Activated CD4-positive, alpha-beta memory T cell treated with anti-CD3 and anti-CD28 coated beads for 36 hours (primary cell): ENCODE measurements at regions of chr12 and their contacts with region 1.

Region 1: DNA sequence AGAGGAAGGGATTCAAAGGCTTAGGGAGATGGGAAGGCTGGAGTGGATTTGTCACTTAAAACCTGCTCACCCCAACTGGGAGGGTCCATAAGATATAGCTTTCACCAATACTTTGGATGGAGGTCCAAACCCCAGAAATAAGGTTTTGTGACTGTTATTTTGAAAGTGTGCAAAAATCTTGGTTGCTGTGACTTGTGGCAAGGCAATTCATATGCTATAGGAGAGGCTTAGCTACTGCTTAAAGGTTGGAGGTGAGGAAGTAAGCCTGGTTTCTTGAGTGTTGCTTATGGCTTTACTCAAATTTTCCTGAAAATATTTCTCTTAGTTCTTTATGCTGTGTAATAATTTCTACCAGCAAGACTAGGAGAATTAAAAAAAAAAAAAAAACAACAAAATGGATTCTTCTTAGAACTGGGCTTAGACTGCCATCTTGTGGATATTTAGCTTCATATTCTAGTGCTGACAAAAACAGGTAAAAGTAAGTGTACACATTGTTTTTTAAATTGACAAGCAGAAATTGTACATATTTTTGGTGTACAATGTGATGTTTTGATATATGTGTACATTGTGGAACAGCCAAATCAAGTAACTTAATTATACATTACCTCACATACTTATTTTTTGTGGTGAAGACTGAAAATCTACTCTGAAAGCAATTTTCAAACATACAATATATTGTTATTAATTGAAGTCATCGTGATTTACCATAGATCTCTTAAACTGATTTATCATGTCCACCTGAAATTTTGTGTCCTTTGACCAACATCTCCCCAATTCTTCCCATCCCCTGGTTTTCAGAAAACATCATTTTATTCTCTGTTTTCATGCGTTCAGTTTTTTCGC is 23.0 kb downstream of the PDE6H start:
- DNase-seq: no peak
- H3K4me3 Mint-ChIP-seq: no peak overlapping the region
- H3K27ac Mint-ChIP-seq: no peak overlapping the region
- H3K4me1 Mint-ChIP-seq: peaks cover 25% of the 10 kb centered on the region
- H3K27me3 Mint-ChIP-seq: no peaks in the 10 kb centered on the region

Region 2: DNA sequence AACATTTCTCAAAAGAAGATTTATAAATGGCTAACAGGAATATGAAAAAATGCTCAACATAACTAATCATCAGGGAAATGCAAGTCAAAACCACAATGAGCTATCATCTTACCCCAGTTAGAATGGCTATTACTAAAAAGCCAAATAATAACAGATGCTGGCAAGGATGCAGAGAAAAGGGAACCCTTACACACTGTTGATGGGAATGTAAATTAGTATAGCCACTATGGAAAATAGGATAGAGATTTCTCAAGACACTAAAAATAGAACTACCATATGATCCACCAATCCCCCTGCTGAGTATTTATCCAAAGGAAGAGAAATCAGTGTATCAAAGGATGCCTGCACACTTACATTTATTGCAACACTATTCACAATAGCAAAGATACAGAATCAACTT is 357.7 kb before region 1 on chr12:
- CTCF ChIA-PET with region 1: no interaction called
- POLR2A ChIA-PET with region 1: no interaction called
- intact Hi-C with region 1: no loop called
- DNase-seq: no peak
- H3K4me3 Mint-ChIP-seq: no peak overlapping the region
- H3K27ac Mint-ChIP-seq: no peak overlapping the region
- H3K4me1 Mint-ChIP-seq: peaks cover 7% of the 10 kb centered on the region
- H3K27me3 Mint-ChIP-seq: no peaks in the 10 kb centered on the region

Region 3: DNA sequence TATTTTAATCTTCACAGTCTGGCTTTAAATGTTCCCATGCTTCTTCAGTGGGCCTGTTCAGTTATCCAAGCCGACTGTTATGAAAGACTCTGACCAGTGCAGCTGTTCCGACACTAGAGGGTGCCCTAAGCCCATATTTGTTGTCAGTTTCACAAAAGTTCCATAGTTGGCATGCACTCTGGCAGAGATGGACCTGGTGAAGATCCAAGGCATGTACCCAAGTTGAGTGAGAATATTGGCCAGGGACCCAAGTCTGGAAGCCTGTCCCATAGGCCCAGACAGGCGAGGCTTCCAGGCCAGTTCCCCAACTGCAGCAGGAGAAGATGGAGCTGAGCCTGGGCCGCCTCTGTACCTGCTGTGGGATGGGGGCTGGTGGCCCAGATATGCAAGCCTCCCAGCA is 272.0 kb before region 1 on chr12:
- CTCF ChIA-PET with region 1: interaction called, 33 read pairs
- POLR2A ChIA-PET with region 1: no interaction called
- intact Hi-C with region 1: loop called (anchors 1 kb)
- DNase-seq: peak; percentile 65
- H3K4me3 Mint-ChIP-seq: no peak overlapping the region
- H3K27ac Mint-ChIP-seq: no peak overlapping the region
- H3K4me1 Mint-ChIP-seq: no peaks in the 10 kb centered on the region
- H3K27me3 Mint-ChIP-seq: peaks cover 2% of the 10 kb centered on the region

Region 4: GRCh38 chr12:14845350-14845750 is 150.5 kb before region 1 on chr12:
- CTCF ChIA-PET with region 1: interaction called, 121 read pairs
- POLR2A ChIA-PET with region 1: no interaction called
- intact Hi-C with region 1: loop called (anchors 1 kb)
- DNase-seq: peak; percentile 43
- H3K4me3 Mint-ChIP-seq: no peak overlapping the region
- H3K27ac Mint-ChIP-seq: no peak overlapping the region
- H3K4me1 Mint-ChIP-seq: no peaks in the 10 kb centered on the region
- H3K27me3 Mint-ChIP-seq: no peaks in the 10 kb centered on the region

Region 5: DNA sequence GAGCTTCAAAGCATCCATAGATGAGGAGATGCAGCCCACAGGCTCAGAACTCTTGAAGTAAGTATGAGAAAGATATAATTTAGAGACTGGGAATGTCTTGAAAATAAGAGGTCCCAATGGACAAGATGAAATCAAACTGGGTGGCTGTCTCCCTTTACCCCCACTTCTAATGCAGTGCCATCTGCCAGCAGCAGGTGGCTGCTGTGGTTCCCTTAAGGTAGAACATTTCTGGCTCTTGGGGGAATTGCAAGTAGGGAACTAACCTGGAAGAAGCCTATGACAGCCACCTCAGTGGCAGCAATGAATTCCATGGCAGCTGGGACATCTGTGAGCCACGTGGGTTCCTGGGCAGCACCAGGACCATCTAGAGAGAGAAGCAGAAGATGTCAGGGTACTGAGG is 58.1 kb before region 1 on chr12:
- CTCF ChIA-PET with region 1: interaction called, 41 read pairs
- POLR2A ChIA-PET with region 1: no interaction called
- intact Hi-C with region 1: loop called (anchors 2 kb)
- DNase-seq: peak; percentile 33
- H3K4me3 Mint-ChIP-seq: no peak overlapping the region
- H3K27ac Mint-ChIP-seq: peak overlapping the region; percentile 50
- H3K4me1 Mint-ChIP-seq: peaks cover 38% of the 10 kb centered on the region
- H3K27me3 Mint-ChIP-seq: no peaks in the 10 kb centered on the region

Region 6: GRCh38 chr12:14960548-14961465 is 35.0 kb before region 1 on chr12:
- CTCF ChIA-PET with region 1: interaction called, 4 read pairs
- POLR2A ChIA-PET with region 1: interaction called, 4 read pairs
- intact Hi-C with region 1: loop called (anchors 2 kb)
- DNase-seq: peak; percentile 49
- H3K4me3 Mint-ChIP-seq: peak overlapping the region; percentile 88
- H3K27ac Mint-ChIP-seq: peak overlapping the region; percentile 96
- H3K4me1 Mint-ChIP-seq: peaks cover 43% of the 10 kb centered on the region
- H3K27me3 Mint-ChIP-seq: no peaks in the 10 kb centered on the region

Region 7: GRCh38 chr12:15074351-15074750 is 78.5 kb after region 1 on chr12:
- CTCF ChIA-PET with region 1: no interaction called
- POLR2A ChIA-PET with region 1: no interaction called
- intact Hi-C with region 1: no loop called
- DNase-seq: no peak
- H3K4me3 Mint-ChIP-seq: no peak overlapping the region
- H3K27ac Mint-ChIP-seq: no peak overlapping the region
- H3K4me1 Mint-ChIP-seq: peaks cover 11% of the 10 kb centered on the region
- H3K27me3 Mint-ChIP-seq: peaks cover 6% of the 10 kb centered on the region

Region 8: DNA sequence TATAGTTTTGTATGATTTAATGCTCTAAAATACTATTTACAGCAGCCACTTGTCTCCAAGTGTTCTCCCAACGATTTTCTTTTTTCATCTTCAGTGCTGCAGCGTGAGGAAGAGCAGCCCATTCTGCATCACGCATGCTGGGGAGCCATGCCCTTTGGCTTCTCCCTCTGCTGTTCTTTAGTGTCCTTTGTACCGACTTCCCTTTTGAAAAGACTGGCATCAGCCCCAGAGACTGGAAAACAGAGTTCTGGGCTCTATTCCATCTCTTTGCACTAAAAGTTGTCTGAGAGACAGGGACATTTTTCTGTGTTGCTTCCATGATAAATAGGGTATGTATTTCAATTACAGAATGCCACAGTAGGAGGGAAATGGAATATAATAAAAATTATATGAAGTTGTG is 120.3 kb after region 1 on chr12:
- CTCF ChIA-PET with region 1: no interaction called
- POLR2A ChIA-PET with region 1: no interaction called
- intact Hi-C with region 1: no loop called
- DNase-seq: no peak
- H3K4me3 Mint-ChIP-seq: no peak overlapping the region
- H3K27ac Mint-ChIP-seq: no peak overlapping the region
- H3K4me1 Mint-ChIP-seq: no peaks in the 10 kb centered on the region
- H3K27me3 Mint-ChIP-seq: peaks cover 4% of the 10 kb centered on the region